CD8-positive, alpha-beta T cell (primary cell): ENCODE measurements at regions of chr11 and their contacts with region 1.

Region 1: DNA sequence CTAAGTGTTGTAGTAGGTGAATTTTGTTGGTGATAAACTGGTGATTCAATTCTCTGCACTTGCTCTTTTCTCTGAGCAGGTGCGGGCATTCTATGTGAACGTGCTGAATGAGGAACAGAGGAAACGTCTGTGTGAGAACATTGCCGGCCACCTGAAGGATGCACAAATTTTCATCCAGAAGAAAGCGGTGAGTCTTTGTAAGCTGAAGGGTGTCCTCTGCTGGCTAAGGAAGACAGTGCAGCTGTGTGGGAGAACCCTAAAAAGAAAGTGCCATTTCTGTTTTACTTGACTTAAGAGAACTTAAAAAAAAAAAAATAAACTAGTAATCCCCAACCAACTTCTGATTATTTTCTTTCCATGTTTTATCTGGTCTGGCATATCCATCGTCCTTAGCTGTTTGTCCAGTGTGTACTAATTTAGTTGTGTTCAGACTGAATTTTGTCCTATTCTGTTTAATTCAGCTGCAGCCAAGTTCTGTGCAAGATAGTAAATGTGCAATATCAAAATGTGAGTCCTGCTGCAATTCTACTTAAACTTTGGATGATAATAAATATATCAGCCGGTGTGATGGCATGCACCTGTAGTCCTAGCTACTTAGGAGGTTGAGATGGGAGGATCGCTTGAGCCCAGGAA is 29.6 kb downstream of the CAT start:
- DNase-seq: peak in 6 of 9 experiments; percentile 5 to 55 (median 32)
- ATAC-seq: peak; percentile 76
- H3K4me3 ChIP-seq: no peak overlapping the region
- H3K4me3 Mint-ChIP-seq: no peak overlapping the region
- H3K27ac ChIP-seq: no peak overlapping the region
- H3K27ac Mint-ChIP-seq: no peak overlapping the region
- H3K4me1 ChIP-seq: no peaks in the 10 kb centered on the region
- H3K4me1 Mint-ChIP-seq: peaks cover 2% of the 10 kb centered on the region
- H3K27me3 ChIP-seq: no peaks in the 10 kb centered on the region
- H3K27me3 Mint-ChIP-seq: no peaks in the 10 kb centered on the region
- CTCF ChIP-seq: peak; percentile 65

Region 2: GRCh38 chr11:34457607-34458006 is 10.7 kb before region 1 on chr11:
- CTCF ChIA-PET with region 1: no interaction called
- POLR2A ChIA-PET with region 1: no interaction called
- intact Hi-C with region 1: no loop called
- DNase-seq: no peak
- ATAC-seq: no peak
- H3K4me3 ChIP-seq: no peak overlapping the region
- H3K4me3 Mint-ChIP-seq: no peak overlapping the region
- H3K27ac ChIP-seq: no peak overlapping the region
- H3K27ac Mint-ChIP-seq: no peak overlapping the region
- H3K4me1 ChIP-seq: no peaks in the 10 kb centered on the region
- H3K4me1 Mint-ChIP-seq: no peaks in the 10 kb centered on the region
- H3K27me3 ChIP-seq: no peaks in the 10 kb centered on the region
- H3K27me3 Mint-ChIP-seq: no peaks in the 10 kb centered on the region
- CTCF ChIP-seq: no peak

Region 3: DNA sequence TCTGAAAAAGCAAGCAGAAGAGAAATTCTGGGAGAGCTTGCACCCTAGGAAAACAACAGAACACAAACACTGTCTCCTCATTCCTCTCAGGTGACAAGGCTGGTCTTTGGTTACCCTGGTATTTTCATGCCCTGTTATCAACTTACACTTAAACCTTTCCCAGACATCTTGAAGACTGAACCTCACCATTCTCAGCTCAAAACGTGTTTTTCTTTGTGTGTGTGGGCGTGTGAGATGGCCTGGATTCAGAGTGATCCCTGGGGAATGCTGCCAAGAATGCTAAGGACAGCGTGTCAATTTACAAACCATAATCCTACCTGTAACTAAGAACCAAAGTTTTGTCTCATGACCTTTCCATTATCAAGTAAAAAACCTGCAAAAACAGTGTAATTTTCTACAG is 12.0 kb after region 1 on chr11:
- CTCF ChIA-PET with region 1: interaction called, 10 read pairs
- POLR2A ChIA-PET with region 1: interaction called, 5 read pairs
- intact Hi-C with region 1: no loop called
- DNase-seq: no peak
- ATAC-seq: no peak
- H3K4me3 ChIP-seq: no peak overlapping the region
- H3K4me3 Mint-ChIP-seq: no peak overlapping the region
- H3K27ac ChIP-seq: no peak overlapping the region
- H3K27ac Mint-ChIP-seq: no peak overlapping the region
- H3K4me1 ChIP-seq: no peaks in the 10 kb centered on the region
- H3K4me1 Mint-ChIP-seq: no peaks in the 10 kb centered on the region
- H3K27me3 ChIP-seq: no peaks in the 10 kb centered on the region
- H3K27me3 Mint-ChIP-seq: peaks cover 2% of the 10 kb centered on the region
- CTCF ChIP-seq: no peak

Region 4: GRCh38 chr11:34492806-34493414 is 24.6 kb after region 1 on chr11:
- CTCF ChIA-PET with region 1: interaction called, 12 read pairs
- POLR2A ChIA-PET with region 1: no interaction called
- intact Hi-C with region 1: no loop called
- DNase-seq: peak in 5 of 9 experiments; percentile 26 to 55 (median 42)
- ATAC-seq: no peak
- H3K4me3 ChIP-seq: no peak overlapping the region
- H3K4me3 Mint-ChIP-seq: no peak overlapping the region
- H3K27ac ChIP-seq: no peak overlapping the region
- H3K27ac Mint-ChIP-seq: no peak overlapping the region
- H3K4me1 ChIP-seq: no peaks in the 10 kb centered on the region
- H3K4me1 Mint-ChIP-seq: no peaks in the 10 kb centered on the region
- H3K27me3 ChIP-seq: no peaks in the 10 kb centered on the region
- H3K27me3 Mint-ChIP-seq: peaks cover 2% of the 10 kb centered on the region
- CTCF ChIP-seq: peak; percentile 42

Region 5: DNA sequence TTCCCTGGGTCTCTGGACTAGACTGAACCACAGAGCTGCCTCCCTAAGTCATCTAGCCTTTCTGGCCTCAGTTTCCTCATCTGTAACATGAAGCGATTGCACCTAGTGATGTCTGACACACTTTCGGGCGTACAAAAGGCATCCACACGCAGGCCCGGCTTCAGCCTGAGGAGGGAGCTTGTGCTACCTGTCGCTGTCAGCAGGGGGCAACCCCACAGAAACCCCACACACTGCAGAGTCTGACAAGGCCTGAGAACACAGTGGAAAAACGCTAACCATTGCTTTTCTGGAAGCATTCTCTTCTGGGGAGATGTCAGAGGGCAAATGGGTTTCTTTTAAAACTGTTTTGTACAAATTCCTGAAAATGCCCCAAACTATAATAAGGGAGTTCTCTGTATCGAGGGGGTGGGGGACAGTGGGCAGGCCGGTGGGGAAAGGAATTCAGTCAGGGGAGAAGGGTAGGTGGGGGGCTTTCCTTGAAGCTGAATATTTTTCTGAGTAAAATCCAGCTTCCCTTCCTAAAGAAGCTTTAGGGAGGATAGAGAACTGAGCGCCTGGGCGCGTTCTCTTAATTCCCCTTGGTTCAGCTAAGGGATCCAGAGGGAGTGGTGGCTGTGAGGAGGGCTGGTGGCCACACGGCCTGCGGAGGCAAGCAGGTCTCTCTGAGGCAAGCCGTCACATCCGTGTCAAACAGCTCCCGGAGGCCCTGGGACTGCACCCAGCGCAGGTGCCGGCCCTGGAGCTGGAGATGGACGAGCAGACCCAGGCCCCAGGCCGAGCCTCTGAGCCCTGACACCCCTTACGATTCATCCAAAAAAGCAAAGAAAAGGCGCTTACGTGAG is 44.7 kb after region 1 on chr11:
- CTCF ChIA-PET with region 1: no interaction called
- POLR2A ChIA-PET with region 1: no interaction called
- intact Hi-C with region 1: no loop called
- DNase-seq: peak; percentile 2 to 58 (median 28)
- ATAC-seq: peak; percentile 73
- H3K4me3 ChIP-seq: no peak overlapping the region
- H3K4me3 Mint-ChIP-seq: no peak overlapping the region
- H3K27ac ChIP-seq: no peak overlapping the region
- H3K27ac Mint-ChIP-seq: no peak overlapping the region
- H3K4me1 ChIP-seq: no peaks in the 10 kb centered on the region
- H3K4me1 Mint-ChIP-seq: no peaks in the 10 kb centered on the region
- H3K27me3 ChIP-seq: no peaks in the 10 kb centered on the region
- H3K27me3 Mint-ChIP-seq: no peaks in the 10 kb centered on the region
- CTCF ChIP-seq: peak; percentile 65